Naive thymus-derived CD4-positive, alpha-beta T cell (primary cell): ENCODE measurements at regions of chr19 and their contacts with region 1.

Region 1: GRCh38 chr19:35269421-35270117 is 807 bp downstream of the USF2 start:
- DNase-seq: peak; percentile 50 to 79 (median 66)
- ATAC-seq: peak; percentile 69
- H3K4me3 ChIP-seq: peak overlapping the region; percentile 44
- H3K4me3 Mint-ChIP-seq: peak overlapping the region; percentile 64 to 93 (median 75)
- H3K27ac ChIP-seq: peak overlapping the region; percentile 66
- H3K27ac Mint-ChIP-seq: peak overlapping the region; percentile 40 to 90 (median 74)
- H3K4me1 ChIP-seq: peaks cover 6 to 17% of the 10 kb centered on the region in 2 donors
- H3K4me1 Mint-ChIP-seq: peaks cover 28 to 54% (median 45%) of the 10 kb centered on the region in 7 donors
- H3K27me3 ChIP-seq: no peaks in the 10 kb centered on the region
- H3K27me3 Mint-ChIP-seq: no peaks in the 10 kb centered on the region

Region 2: GRCh38 chr19:35154525-35155406 is 114.8 kb before region 1 on chr19 and contains the start of gene FXYD5:
- CTCF ChIA-PET with region 1: no interaction called
- POLR2A ChIA-PET with region 1: no interaction called
- intact Hi-C with region 1: loop called in 1 of 2 experiments (anchors 1 kb)
- DNase-seq: peak; percentile 41 to 81 (median 65)
- ATAC-seq: peak; percentile 82
- H3K4me3 ChIP-seq: peak within 1 kb of the TSS; percentile 93
- H3K4me3 Mint-ChIP-seq: peak within 1 kb of the TSS; percentile 98 to 100 (median 99)
- H3K27ac ChIP-seq: peak within 1 kb of the TSS; percentile 94
- H3K27ac Mint-ChIP-seq: peak within 1 kb of the TSS; percentile 96 to 99 (median 99)
- H3K4me1 ChIP-seq: peaks cover 23 to 32% of the 10 kb centered on the region in 2 donors
- H3K4me1 Mint-ChIP-seq: peaks cover 38 to 60% (median 55%) of the 10 kb centered on the region in 7 donors
- H3K27me3 ChIP-seq: no peaks in the 10 kb centered on the region
- H3K27me3 Mint-ChIP-seq: peaks cover 0 to 5% (median 0%) of the 10 kb centered on the region in 5 donors
- total RNA-seq, gene FXYD5: 362 to 458 (median 387) TPM

Region 3: GRCh38 chr19:35204799-35205732 is 64.5 kb before region 1 on chr19:
- CTCF ChIA-PET with region 1: no interaction called
- POLR2A ChIA-PET with region 1: interaction called, 4 read pairs
- intact Hi-C with region 1: loop called in 1 of 2 experiments (anchors 2 kb)
- DNase-seq: peak in 3 of 9 donors; percentile 9 to 29 (median 11)
- ATAC-seq: peak; percentile 29
- H3K4me3 ChIP-seq: no peak overlapping the region
- H3K4me3 Mint-ChIP-seq: peak overlapping the region in 9 of 10 donors; percentile 44 to 87 (median 74)
- H3K27ac ChIP-seq: peak overlapping the region; percentile 87
- H3K27ac Mint-ChIP-seq: peak overlapping the region; percentile 93 to 100 (median 99)
- H3K4me1 ChIP-seq: peaks cover 55% of the 10 kb centered on the region in 2 donors
- H3K4me1 Mint-ChIP-seq: peaks cover 36 to 86% (median 81%) of the 10 kb centered on the region in 7 donors
- H3K27me3 ChIP-seq: no peaks in the 10 kb centered on the region
- H3K27me3 Mint-ChIP-seq: no peaks in the 10 kb centered on the region

Region 4: GRCh38 chr19:35247526-35248306 is 21.9 kb before region 1 on chr19:
- CTCF ChIA-PET with region 1: interaction called, 6 read pairs
- POLR2A ChIA-PET with region 1: interaction called, 7 read pairs
- intact Hi-C with region 1: loop called in 1 of 2 experiments (anchors 1 kb)
- DNase-seq: peak in 4 of 9 donors; percentile 33 to 52 (median 39)
- ATAC-seq: peak; percentile 63
- H3K4me3 ChIP-seq: peak overlapping the region; percentile 81
- H3K4me3 Mint-ChIP-seq: peak overlapping the region; percentile 87 to 92 (median 92)
- H3K27ac ChIP-seq: peak overlapping the region; percentile 63
- H3K27ac Mint-ChIP-seq: peak overlapping the region; percentile 64 to 95 (median 90)
- H3K4me1 ChIP-seq: peaks cover 0 to 4% of the 10 kb centered on the region in 2 donors
- H3K4me1 Mint-ChIP-seq: peaks cover 18 to 41% (median 33%) of the 10 kb centered on the region in 7 donors
- H3K27me3 ChIP-seq: no peaks in the 10 kb centered on the region
- H3K27me3 Mint-ChIP-seq: peaks cover 0 to 66% (median 5%) of the 10 kb centered on the region in 5 donors

Region 5: GRCh38 chr19:35347171-35347929 is 77.8 kb after region 1 on chr19 and contains the start of gene FFAR1:
- CTCF ChIA-PET with region 1: no interaction called
- POLR2A ChIA-PET with region 1: no interaction called
- intact Hi-C with region 1: loop called (anchors 2 kb)
- DNase-seq: peak; percentile 9 to 71 (median 42)
- ATAC-seq: peak; percentile 70
- H3K4me3 ChIP-seq: peak within 1 kb of the TSS; percentile 36
- H3K4me3 Mint-ChIP-seq: peak within 1 kb of the TSS; percentile 45 to 82 (median 63)
- H3K27ac ChIP-seq: no peak within 1 kb of the TSS
- H3K27ac Mint-ChIP-seq: peak within 1 kb of the TSS in 8 of 9 donors; percentile 14 to 95 (median 78)
- H3K4me1 ChIP-seq: peaks cover 18 to 22% of the 10 kb centered on the region in 2 donors
- H3K4me1 Mint-ChIP-seq: peaks cover 22 to 38% (median 27%) of the 10 kb centered on the region in 7 donors
- H3K27me3 ChIP-seq: no peaks in the 10 kb centered on the region
- H3K27me3 Mint-ChIP-seq: peaks cover 0 to 13% (median 4%) of the 10 kb centered on the region in 5 donors
- total RNA-seq, gene FFAR1: 0.10 to 1.3 (median 0.24) TPM in 3 of 5 experiments, not detected in the others

Region 6: GRCh38 chr19:35495107-35496064 is 225.8 kb after region 1 on chr19:
- CTCF ChIA-PET with region 1: interaction called, 5 read pairs
- POLR2A ChIA-PET with region 1: interaction called, 3 read pairs
- intact Hi-C with region 1: loop called (anchors 1 kb)
- DNase-seq: peak; percentile 38 to 81 (median 60)
- ATAC-seq: peak; percentile 99
- H3K4me3 ChIP-seq: no peak overlapping the region
- H3K4me3 Mint-ChIP-seq: peak overlapping the region in 7 of 10 donors; percentile 17 to 62 (median 45)
- H3K27ac ChIP-seq: no peak overlapping the region
- H3K27ac Mint-ChIP-seq: peak overlapping the region in 3 of 9 donors; percentile 22 to 62 (median 47)
- H3K4me1 ChIP-seq: no peaks in the 10 kb centered on the region
- H3K4me1 Mint-ChIP-seq: peaks cover 0 to 9% (median 6%) of the 10 kb centered on the region in 7 donors
- H3K27me3 ChIP-seq: no peaks in the 10 kb centered on the region
- H3K27me3 Mint-ChIP-seq: peaks cover 0 to 12% (median 0%) of the 10 kb centered on the region in 5 donors

Region 7: DNA sequence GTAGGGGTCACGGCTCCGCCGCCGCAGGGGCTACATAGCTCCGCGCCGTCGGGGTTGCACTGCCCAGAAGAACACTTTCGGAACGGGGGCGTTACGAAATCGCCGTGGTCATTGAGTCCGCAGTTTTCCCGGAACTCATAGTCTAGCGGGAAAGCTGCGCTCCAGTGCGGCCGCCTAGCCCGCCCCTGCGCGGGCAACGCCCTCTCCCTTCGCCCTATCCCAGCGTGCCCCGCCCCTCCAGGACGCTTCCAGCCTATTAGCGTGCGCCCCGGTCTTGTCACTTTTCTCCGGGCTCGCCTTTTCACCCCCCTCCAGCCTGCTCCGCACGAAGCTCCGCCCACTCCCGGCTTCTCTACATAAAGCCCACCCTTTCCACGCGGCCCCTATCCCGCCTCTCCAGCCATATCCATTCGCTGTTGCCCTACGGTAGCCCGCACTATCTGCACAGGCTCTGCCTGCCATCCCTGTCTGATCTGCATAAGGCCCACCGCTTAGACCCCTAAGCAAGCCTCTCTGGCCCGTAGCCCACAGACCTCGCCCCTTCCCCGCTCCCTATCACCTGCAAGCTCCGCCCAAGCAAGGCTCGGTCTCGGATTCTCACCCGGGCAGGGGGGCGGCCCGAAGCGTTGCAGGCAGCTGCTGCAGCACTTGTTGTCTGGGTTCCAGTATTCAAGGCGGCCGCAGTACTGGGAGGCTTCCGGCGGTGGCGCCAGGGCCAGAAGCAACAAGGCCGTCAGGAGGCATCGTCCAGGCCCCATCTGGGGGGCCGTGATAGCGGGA is 471.0 kb after region 1 on chr19:
- CTCF ChIA-PET with region 1: no interaction called
- POLR2A ChIA-PET with region 1: no interaction called
- intact Hi-C with region 1: loop called in 1 of 2 experiments (anchors 5 kb)
- DNase-seq: peak; percentile 81 to 95 (median 92)
- ATAC-seq: peak; percentile 78
- H3K4me3 ChIP-seq: peak overlapping the region; percentile 89
- H3K4me3 Mint-ChIP-seq: peak overlapping the region; percentile 87 to 100 (median 92)
- H3K27ac ChIP-seq: peak overlapping the region; percentile 91
- H3K27ac Mint-ChIP-seq: peak overlapping the region; percentile 85 to 99 (median 96)
- H3K4me1 ChIP-seq: peaks cover 27% of the 10 kb centered on the region in 2 donors
- H3K4me1 Mint-ChIP-seq: peaks cover 25 to 67% (median 48%) of the 10 kb centered on the region in 7 donors
- H3K27me3 ChIP-seq: no peaks in the 10 kb centered on the region
- H3K27me3 Mint-ChIP-seq: peaks cover 0 to 2% (median 0%) of the 10 kb centered on the region in 5 donors